Activated CD8-positive, alpha-beta memory T cell treated with anti-CD3 and anti-CD28 coated beads, Interleukin-2, amount 10 ng/mL, durations not matched to agents 7 days and 5 days (primary cell): ENCODE measurements at regions of chr20 and their contacts with region 1.

Region 1: GRCh38 chr20:56411759-56412472 is at the start of gene CASS4:
- DNase-seq: peak; percentile 65
- ATAC-seq: peak; percentile 68
- H3K4me3 Mint-ChIP-seq: peak within 1 kb of the TSS; percentile 81
- H3K27ac Mint-ChIP-seq: peak within 1 kb of the TSS; percentile 95
- H3K4me1 Mint-ChIP-seq: peaks cover 55% of the 10 kb centered on the region
- H3K27me3 Mint-ChIP-seq: no peaks in the 10 kb centered on the region
- total RNA-seq, gene CASS4: 10.9 to 21.8 TPM

Region 2: DNA sequence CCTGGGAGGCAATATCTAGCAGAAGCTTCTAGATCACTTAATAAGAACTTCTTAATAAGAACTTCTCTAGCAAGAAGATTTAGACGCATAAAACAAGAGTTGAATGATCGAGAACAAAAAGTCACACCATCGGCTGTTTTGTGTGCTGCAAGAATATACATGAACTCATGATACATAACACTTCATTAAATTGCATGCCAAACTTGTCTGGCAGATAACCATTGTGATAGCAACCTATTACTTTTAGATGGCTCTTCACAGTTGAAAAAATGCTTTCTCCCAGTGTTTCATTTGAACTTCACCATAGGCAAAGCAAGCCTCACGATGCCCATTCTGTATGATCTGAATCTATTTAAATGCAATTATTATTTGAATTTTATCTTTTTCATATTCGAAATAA is 656.5 kb before region 1 on chr20:
- CTCF ChIA-PET with region 1: no interaction called
- DNase-seq: no peak
- ATAC-seq: no peak
- H3K4me3 Mint-ChIP-seq: no peak overlapping the region
- H3K27ac Mint-ChIP-seq: no peak overlapping the region
- H3K4me1 Mint-ChIP-seq: no peaks in the 10 kb centered on the region
- H3K27me3 Mint-ChIP-seq: no peaks in the 10 kb centered on the region

Region 3: GRCh38 chr20:56392282-56393137 is 19.4 kb before region 1 on chr20 and contains the start of gene CSTF1:
- CTCF ChIA-PET with region 1: interaction called, 16 read pairs
- DNase-seq: peak; percentile 99
- ATAC-seq: peak; percentile 90
- H3K4me3 Mint-ChIP-seq: no peak within 1 kb of the TSS
- H3K27ac Mint-ChIP-seq: no peak within 1 kb of the TSS
- H3K4me1 Mint-ChIP-seq: peaks cover 58% of the 10 kb centered on the region
- H3K27me3 Mint-ChIP-seq: no peaks in the 10 kb centered on the region
- total RNA-seq, gene CSTF1: 60.0 to 82.4 TPM

Region 4: GRCh38 chr20:56422076-56422823 is 10.3 kb after region 1 on chr20:
- CTCF ChIA-PET with region 1: interaction called, 18 read pairs
- DNase-seq: no peak
- ATAC-seq: no peak
- H3K4me3 Mint-ChIP-seq: no peak overlapping the region
- H3K27ac Mint-ChIP-seq: peak overlapping the region; percentile 70
- H3K4me1 Mint-ChIP-seq: peaks cover 62% of the 10 kb centered on the region
- H3K27me3 Mint-ChIP-seq: no peaks in the 10 kb centered on the region